ENCODE measurements at regions of chr1 and their contacts with region 1.

Region 1: DNA sequence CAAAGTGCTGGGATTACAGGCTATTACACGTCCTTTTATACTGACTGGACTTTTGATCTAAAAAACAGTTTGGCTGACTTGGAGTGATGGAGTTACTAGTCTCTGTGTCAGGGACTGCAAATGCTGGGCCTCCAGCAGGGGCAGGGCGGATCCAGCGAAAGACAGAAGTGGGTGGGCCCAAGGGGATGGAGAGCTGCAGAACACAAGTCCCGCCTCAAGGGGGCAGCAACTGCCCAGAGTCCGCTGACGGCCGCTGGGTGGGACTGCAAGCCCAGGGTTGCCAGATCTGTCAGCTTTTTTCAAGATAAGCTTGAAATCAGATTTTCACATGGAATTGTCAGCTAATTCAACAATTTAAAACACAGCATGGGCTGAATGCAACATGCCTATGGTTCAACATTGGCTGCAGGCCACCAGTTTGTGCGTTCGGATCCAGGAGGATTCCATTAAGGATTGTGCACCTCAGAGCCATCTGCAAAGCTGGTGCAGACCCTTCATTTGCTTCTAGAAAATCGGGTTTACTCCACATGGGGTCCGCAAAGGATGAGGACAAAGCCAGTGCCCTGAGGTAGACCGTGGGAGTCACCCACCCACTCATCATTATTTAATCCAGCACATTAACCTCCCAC is 10.7 kb downstream of the STMN1 start:
- DNase-seq: peak; percentile 95
- H3K4me3 ChIP-seq: no peak overlapping the region
- H3K27ac ChIP-seq: peak overlapping the region; percentile 4
- H3K4me1 ChIP-seq: peaks cover 12% of the 10 kb centered on the region
- H3K27me3 ChIP-seq: no peaks in the 10 kb centered on the region
- CTCF ChIP-seq: peak; percentile 98 to 99
- POLR2A ChIP-seq: no peak

Region 2: GRCh38 chr1:25874934-25875855 is 20.3 kb before region 1 on chr1 and contains the start of gene PAQR7:
- CTCF ChIA-PET with region 1: interaction called, 20 read pairs
- POLR2A ChIA-PET with region 1: no interaction called
- dilution Hi-C with region 1: no loop called
- intact Hi-C with region 1: no loop called
- DNase-seq: peak; percentile 70
- H3K4me3 ChIP-seq: peak within 1 kb of the TSS; percentile 33 to 54 (median 43)
- H3K27ac ChIP-seq: no peak within 1 kb of the TSS
- H3K4me1 ChIP-seq: peaks cover 10% of the 10 kb centered on the region
- H3K27me3 ChIP-seq: no peaks in the 10 kb centered on the region
- CTCF ChIP-seq: peak in 1 of 2 donors; percentile 6
- POLR2A ChIP-seq: no peak
- total RNA-seq, gene PAQR7: 8.4 and 9.1 TPM in 2 replicates

Region 3: GRCh38 chr1:25922056-25922969 is 26.8 kb after region 1 on chr1:
- CTCF ChIA-PET with region 1: interaction called, 14 read pairs
- POLR2A ChIA-PET with region 1: no interaction called
- dilution Hi-C with region 1: no loop called
- intact Hi-C with region 1: loop called (anchors 2 kb)
- DNase-seq: peak; percentile 34
- H3K4me3 ChIP-seq: peak overlapping the region; percentile 22 to 49 (median 31)
- H3K27ac ChIP-seq: no peak overlapping the region
- H3K4me1 ChIP-seq: peaks cover 18% of the 10 kb centered on the region
- H3K27me3 ChIP-seq: peaks cover 0 to 6% of the 10 kb centered on the region in 2 experiments
- CTCF ChIP-seq: no peak
- POLR2A ChIP-seq: no peak

Region 4: GRCh38 chr1:25990702-25991395 is 95.4 kb after region 1 on chr1:
- CTCF ChIA-PET with region 1: interaction called, 404 read pairs
- POLR2A ChIA-PET with region 1: no interaction called
- dilution Hi-C with region 1: loop called (anchors 25 kb)
- intact Hi-C with region 1: no loop called
- DNase-seq: no peak
- H3K4me3 ChIP-seq: no peak overlapping the region
- H3K27ac ChIP-seq: no peak overlapping the region
- H3K4me1 ChIP-seq: no peaks in the 10 kb centered on the region
- H3K27me3 ChIP-seq: no peaks in the 10 kb centered on the region
- CTCF ChIP-seq: no peak
- POLR2A ChIP-seq: no peak

Region 5: DNA sequence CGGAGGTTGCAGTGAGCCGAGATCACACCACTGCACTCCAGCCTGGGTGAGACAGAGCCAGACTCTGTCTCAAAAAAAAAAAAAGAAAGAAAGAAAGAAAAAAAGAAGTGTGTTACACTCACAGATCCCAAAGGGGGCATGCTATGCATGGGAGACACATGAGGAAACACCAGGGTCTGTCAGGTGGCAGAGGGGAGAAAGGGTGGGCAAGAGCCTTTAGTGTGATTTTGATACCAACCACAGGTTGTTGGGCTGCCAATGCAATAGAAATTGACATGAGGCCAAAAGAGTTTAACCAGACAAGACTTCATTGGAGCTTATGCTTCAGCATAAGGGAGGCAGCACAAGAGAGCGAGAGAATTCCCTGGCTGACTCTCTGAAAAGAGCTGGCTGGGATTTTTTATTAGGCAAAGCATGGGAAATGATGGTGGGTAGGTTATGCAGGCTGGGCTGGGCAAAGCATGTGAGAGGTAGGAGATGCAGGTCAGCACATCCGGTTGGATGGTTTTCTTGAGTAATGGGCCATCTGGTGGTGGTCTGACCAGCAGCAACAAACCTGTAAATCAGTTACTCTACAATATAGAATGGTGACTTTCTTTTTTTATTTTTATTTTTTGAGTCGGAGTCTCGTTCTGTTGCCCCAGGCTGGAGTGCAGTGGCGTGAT is 114.4 kb after region 1 on chr1:
- CTCF ChIA-PET with region 1: interaction called, 20 read pairs
- POLR2A ChIA-PET with region 1: no interaction called
- dilution Hi-C with region 1: no loop called
- intact Hi-C with region 1: no loop called
- DNase-seq: no peak
- H3K4me3 ChIP-seq: no peak overlapping the region
- H3K27ac ChIP-seq: no peak overlapping the region
- H3K4me1 ChIP-seq: no peaks in the 10 kb centered on the region
- H3K27me3 ChIP-seq: peaks cover 0 to 3% of the 10 kb centered on the region in 2 experiments
- CTCF ChIP-seq: peak in 1 of 2 donors; percentile 1
- POLR2A ChIP-seq: no peak

Region 6: GRCh38 chr1:26035959-26036755 is 140.7 kb after region 1 on chr1:
- CTCF ChIA-PET with region 1: interaction called, 25 read pairs
- POLR2A ChIA-PET with region 1: no interaction called
- dilution Hi-C with region 1: no loop called
- intact Hi-C with region 1: loop called (anchors 1 kb)
- DNase-seq: peak; percentile 74
- H3K4me3 ChIP-seq: peak overlapping the region; percentile 65 to 85 (median 81)
- H3K27ac ChIP-seq: no peak overlapping the region
- H3K4me1 ChIP-seq: peaks cover 15% of the 10 kb centered on the region
- H3K27me3 ChIP-seq: peaks cover 0 to 3% of the 10 kb centered on the region in 2 experiments
- CTCF ChIP-seq: peak; percentile 98 to 99
- POLR2A ChIP-seq: no peak

Measured in endothelial cell of umbilical vein (primary cell).